Endothelial cell of umbilical vein (primary cell): ENCODE measurements at regions of chr11 and their contacts with region 1.

Region 1: GRCh38 chr11:105197071-105197815 is 57.7 kb upstream of the CARD18 start:
- DNase-seq: no peak
- H3K4me3 ChIP-seq: no peak overlapping the region
- H3K27ac ChIP-seq: no peak overlapping the region
- H3K4me1 ChIP-seq: no peaks in the 10 kb centered on the region
- H3K27me3 ChIP-seq: no peaks in the 10 kb centered on the region
- CTCF ChIP-seq: no peak
- POLR2A ChIP-seq: no peak

Region 2: GRCh38 chr11:104784684-104785460 is 412.4 kb before region 1 on chr11:
- CTCF ChIA-PET with region 1: no interaction called
- POLR2A ChIA-PET with region 1: no interaction called
- dilution Hi-C with region 1: no loop called
- intact Hi-C with region 1: no loop called
- DNase-seq: no peak
- H3K4me3 ChIP-seq: no peak overlapping the region
- H3K27ac ChIP-seq: no peak overlapping the region
- H3K4me1 ChIP-seq: no peaks in the 10 kb centered on the region
- H3K27me3 ChIP-seq: no peaks in the 10 kb centered on the region
- CTCF ChIP-seq: no peak
- POLR2A ChIP-seq: no peak

Region 3: GRCh38 chr11:105100206-105100605 is 97.0 kb before region 1 on chr11:
- CTCF ChIA-PET with region 1: no interaction called
- POLR2A ChIA-PET with region 1: no interaction called
- dilution Hi-C with region 1: no loop called
- intact Hi-C with region 1: no loop called
- DNase-seq: peak; percentile 51
- H3K4me3 ChIP-seq: no peak overlapping the region
- H3K27ac ChIP-seq: peak overlapping the region; percentile 32
- H3K4me1 ChIP-seq: peaks cover 9% of the 10 kb centered on the region
- H3K27me3 ChIP-seq: no peaks in the 10 kb centered on the region
- CTCF ChIP-seq: no peak
- POLR2A ChIP-seq: no peak

Region 4: DNA sequence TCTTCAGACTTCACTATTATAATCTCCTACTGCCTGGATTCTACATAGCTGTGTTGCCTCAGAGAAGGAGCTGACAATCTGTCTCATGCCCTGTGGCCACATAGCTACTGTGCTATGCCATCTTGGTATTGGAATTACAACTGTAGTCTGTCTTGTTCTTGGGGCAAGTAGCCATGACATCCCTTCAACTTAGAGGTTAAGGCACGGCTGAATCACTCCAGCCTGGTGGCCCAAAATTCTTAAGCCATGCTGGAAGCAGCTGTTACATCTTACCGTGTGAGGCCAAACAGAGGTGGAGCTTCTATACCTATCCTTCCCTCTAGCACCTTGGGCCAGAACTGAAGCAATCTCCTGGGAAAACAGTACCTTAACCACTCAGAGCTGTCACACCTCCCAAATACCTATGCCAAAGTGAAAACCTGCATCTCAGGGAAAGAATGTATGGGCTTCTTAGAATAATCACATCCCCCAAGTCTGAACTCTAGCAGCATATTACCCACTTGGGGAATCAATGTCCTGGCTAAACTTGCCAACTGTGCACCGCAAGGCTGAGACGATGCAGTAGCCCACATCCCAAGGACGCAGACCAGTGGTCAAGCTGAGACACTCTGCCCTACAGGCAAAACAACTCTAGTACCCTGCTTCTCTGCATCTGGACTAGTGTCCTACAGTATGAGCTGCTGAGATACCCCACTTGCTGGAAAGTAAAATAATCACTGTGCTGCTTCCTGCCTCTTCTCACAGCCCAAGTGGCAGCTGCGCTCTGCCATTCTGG is 72.3 kb before region 1 on chr11:
- CTCF ChIA-PET with region 1: no interaction called
- POLR2A ChIA-PET with region 1: no interaction called
- dilution Hi-C with region 1: no loop called
- intact Hi-C with region 1: loop called (anchors 5 kb)
- DNase-seq: no peak
- H3K4me3 ChIP-seq: no peak overlapping the region
- H3K27ac ChIP-seq: no peak overlapping the region
- H3K4me1 ChIP-seq: no peaks in the 10 kb centered on the region
- H3K27me3 ChIP-seq: no peaks in the 10 kb centered on the region
- CTCF ChIP-seq: no peak
- POLR2A ChIP-seq: no peak